ENCODE measurements at regions of chr5 and their contacts with region 1.

Region 1: DNA sequence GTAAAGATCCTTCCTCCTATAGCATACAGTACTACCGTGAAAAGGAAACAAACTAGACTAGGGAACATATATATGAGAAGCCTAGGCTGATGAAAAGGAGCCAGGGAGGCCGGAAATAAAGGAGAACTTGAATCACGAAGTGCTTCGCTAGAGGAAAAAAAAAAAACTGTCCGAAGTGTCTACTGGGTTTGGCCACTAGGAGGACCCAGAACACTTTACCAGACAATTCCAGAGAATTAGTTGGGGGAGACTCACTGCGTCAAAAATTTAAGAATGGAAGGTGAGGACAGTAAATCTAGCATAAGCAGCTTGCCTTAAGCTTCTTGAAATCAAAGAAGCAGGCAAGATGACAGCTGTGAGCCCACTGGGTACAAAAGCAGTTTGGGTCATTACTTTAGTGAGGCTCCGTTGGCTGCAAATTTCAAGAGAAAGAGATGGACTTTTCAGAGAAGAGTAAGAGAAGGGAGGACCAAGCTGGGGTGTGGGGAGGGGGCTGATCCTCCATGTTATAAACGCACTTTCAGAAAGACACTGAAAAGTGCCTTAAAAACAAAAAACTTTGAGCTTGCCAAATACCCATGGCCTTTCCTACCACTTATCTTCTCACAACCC is 47.4 kb downstream of the P4HA2 start:
- DNase-seq: peak; percentile 47
- ATAC-seq: peak; percentile 73
- H3K4me3 ChIP-seq: no peak overlapping the region
- H3K27ac ChIP-seq: no peak overlapping the region
- H3K4me1 ChIP-seq: peaks cover 3 to 19% of the 10 kb centered on the region in 2 experiments; a peak in 3 of 4 replicates
- H3K27me3 ChIP-seq: no peaks in the 10 kb centered on the region
- CTCF ChIP-seq: peak; percentile 72 to 85 (median 75); a peak in 5 of 6 replicates
- POLR2A ChIP-seq: no peak
- RAD21 ChIP-seq: peak; percentile 83

Region 2: DNA sequence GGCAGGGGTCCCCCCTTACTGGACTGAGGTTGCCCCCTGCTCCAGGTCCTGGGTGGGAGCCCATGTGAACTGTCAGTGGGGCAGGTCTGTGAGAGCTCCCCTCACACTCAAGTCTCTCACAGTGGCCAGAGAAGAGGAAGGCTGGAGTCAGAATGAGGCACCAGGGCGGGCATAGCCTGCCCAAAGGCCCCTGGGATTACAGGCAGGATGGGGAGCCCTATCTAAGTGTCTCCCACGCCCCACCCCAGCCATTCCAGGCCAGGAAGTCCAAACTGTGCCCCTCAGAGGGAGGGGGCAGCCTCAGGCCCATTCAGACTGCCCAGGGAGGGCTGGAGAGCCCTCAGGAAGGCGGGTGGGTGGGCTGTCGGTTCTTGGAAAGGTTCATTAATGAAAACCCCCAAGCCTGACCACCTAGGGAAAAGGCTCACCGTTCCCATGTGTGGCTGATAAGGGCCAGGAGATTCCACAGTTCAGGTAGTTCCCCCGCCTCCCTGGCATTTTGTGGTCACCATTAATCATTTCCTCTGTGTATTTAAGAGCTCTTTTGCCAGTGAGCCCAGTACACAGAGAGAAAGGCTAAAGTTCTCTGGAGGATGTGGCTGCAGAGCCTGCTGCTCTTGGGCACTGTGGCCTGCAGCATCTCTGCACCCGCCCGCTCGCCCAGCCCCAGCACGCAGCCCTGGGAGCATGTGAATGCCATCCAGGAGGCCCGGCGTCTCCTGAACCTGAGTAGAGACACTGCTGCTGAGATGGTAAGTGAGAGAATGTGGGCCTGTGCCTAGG is 106.8 kb before region 1 on chr5 and contains the start of gene CSF2:
- CTCF ChIA-PET with region 1: no interaction called
- POLR2A ChIA-PET with region 1: no interaction called
- RAD21 ChIA-PET with region 1: no interaction called
- intact Hi-C with region 1: no loop called
- DNase-seq: no peak
- ATAC-seq: peak; percentile 30; the same call in 1 of the 2 replicates
- H3K4me3 ChIP-seq: no peak within 1 kb of the TSS
- H3K27ac ChIP-seq: no peak within 1 kb of the TSS; the same call in 1 of the 2 replicates
- H3K4me1 ChIP-seq: peaks cover 16 to 29% of the 10 kb centered on the region in 2 experiments
- H3K27me3 ChIP-seq: no peaks in the 10 kb centered on the region
- CTCF ChIP-seq: no peak
- POLR2A ChIP-seq: no peak
- RAD21 ChIP-seq: no peak
- total RNA-seq, gene CSF2: 0.30 TPM

Region 3: GRCh38 chr5:132190161-132190817 is 10.0 kb after region 1 on chr5:
- CTCF ChIA-PET with region 1: interaction called, 10 read pairs
- POLR2A ChIA-PET with region 1: no interaction called
- RAD21 ChIA-PET with region 1: no interaction called
- intact Hi-C with region 1: no loop called
- DNase-seq: peak; percentile 51
- ATAC-seq: peak; percentile 100
- H3K4me3 ChIP-seq: no peak overlapping the region
- H3K27ac ChIP-seq: no peak overlapping the region
- H3K4me1 ChIP-seq: no peaks in the 10 kb centered on the region
- H3K27me3 ChIP-seq: no peaks in the 10 kb centered on the region
- CTCF ChIP-seq: peak; percentile 52 to 84 (median 83); a peak in 5 of 6 replicates
- POLR2A ChIP-seq: no peak
- RAD21 ChIP-seq: peak; percentile 64

Region 4: DNA sequence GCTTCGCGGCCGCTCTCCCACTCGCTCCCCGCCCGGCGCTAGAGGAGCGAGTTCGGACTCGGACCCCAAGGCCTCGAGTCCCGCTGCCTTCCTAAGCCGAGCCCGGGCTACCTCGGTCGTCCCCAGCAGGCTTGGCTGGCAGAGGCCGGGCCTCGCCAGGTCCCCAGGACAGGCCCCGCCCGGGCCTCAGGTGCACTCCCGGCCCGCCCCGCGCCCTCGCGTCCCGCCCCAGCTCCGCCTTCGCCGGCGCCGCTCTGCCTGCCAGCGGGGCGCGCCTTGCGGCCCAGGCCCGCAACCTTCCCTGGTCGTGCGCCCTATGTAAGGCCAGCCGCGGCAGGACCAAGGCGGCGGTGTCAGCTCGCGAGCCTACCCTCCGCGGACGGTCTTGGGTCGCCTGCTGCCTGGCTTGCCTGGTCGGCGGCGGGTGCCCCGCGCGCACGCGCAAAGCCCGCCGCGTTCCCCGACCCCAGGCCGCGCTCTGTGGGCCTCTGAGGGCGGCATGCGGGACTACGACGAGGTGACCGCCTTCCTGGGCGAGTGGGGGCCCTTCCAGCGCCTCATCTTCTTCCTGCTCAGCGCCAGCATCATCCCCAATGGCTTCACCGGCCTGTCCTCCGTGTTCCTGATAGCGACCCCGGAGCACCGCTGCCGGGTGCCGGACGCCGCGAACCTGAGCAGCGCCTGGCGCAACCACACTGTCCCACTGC is 189.4 kb after region 1 on chr5 and contains the start of gene SLC22A5:
- CTCF ChIA-PET with region 1: interaction called, 3 read pairs
- POLR2A ChIA-PET with region 1: no interaction called
- RAD21 ChIA-PET with region 1: no interaction called
- intact Hi-C with region 1: loop called (anchors 10 kb)
- DNase-seq: peak; percentile 42
- ATAC-seq: peak; percentile 94
- H3K4me3 ChIP-seq: peak within 1 kb of the TSS; percentile 71 to 75
- H3K27ac ChIP-seq: peak within 1 kb of the TSS; percentile 83
- H3K4me1 ChIP-seq: peaks cover 16 to 47% of the 10 kb centered on the region in 2 experiments
- H3K27me3 ChIP-seq: no peaks in the 10 kb centered on the region
- CTCF ChIP-seq: no peak
- POLR2A ChIP-seq: peak; percentile 71
- RAD21 ChIP-seq: no peak
- total RNA-seq, gene SLC22A5: 9.9 TPM

Measured in HCT116 (cell line).